CD8-positive, alpha-beta T cell (primary cell): ENCODE measurements at regions of chr16 and their contacts with region 1.

Region 1: GRCh38 chr16:58629572-58630104 is at the start of gene CNOT1:
- DNase-seq: peak; percentile 95 to 99 (median 97)
- ATAC-seq: peak; percentile 78
- H3K4me3 ChIP-seq: peak within 1 kb of the TSS; percentile 93
- H3K4me3 Mint-ChIP-seq: peak within 1 kb of the TSS; percentile 100
- H3K27ac ChIP-seq: peak within 1 kb of the TSS; percentile 91 to 98
- H3K27ac Mint-ChIP-seq: peak within 1 kb of the TSS; percentile 100
- H3K4me1 ChIP-seq: peaks cover 18% of the 10 kb centered on the region
- H3K4me1 Mint-ChIP-seq: peaks cover 30% of the 10 kb centered on the region
- H3K27me3 ChIP-seq: no peaks in the 10 kb centered on the region
- H3K27me3 Mint-ChIP-seq: no peaks in the 10 kb centered on the region
- CTCF ChIP-seq: no peak
- total RNA-seq, gene CNOT1: 165 to 177 TPM

Region 2: DNA sequence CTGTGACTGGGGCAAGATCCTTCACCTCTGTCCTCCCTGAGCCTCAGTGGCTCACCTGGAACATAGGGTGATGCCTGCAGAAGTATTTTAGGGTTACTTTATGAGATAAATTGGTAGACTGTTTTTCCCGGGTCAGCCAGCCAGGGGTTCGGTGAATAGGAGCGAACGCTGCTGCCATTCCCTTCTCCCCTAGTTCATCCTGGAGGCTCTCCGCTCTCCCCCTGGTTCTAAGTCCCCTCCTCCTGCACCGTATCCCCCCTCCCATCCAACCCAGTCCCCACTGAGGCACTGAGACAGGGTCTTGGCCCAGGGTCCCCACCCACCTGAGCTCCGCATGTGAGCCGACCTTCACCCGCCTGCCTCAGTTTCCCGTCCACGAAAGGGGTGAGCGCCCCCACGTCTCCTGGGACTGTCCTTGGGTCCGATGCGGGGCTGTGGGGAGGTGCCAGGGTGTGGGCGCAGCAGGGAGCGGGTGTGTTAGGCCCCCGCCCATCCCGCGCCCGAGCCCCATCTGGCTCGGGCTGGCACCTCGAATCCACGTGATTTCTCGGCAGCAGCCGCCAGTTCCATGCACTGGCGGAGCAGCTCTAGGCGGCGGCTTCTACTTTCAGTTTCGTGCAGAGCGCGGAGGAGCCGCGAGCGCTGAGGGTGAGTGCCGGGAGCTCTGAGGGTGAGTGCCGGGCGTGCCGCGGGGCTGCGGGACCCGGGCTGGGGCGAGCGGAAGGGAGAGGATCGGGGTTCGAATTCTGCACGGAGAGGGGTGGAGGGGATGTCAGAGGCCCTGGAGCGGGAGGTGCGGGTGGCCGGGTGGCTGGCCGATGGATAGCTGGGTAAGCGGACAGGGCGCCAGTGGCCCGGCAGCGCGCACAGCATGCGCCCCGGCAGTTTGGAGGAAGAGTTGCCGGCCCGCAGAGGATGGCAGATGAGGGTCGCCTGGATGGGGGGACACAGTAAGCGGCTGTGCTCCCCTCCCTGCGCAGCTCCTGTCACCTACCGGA is 1640.4 kb before region 1 on chr16 and contains the start of gene NLRC5:
- CTCF ChIA-PET with region 1: no interaction called
- POLR2A ChIA-PET with region 1: no interaction called
- intact Hi-C with region 1: no loop called
- DNase-seq: peak; percentile 79 to 95 (median 89)
- ATAC-seq: peak; percentile 81
- H3K4me3 ChIP-seq: peak within 1 kb of the TSS; percentile 98
- H3K4me3 Mint-ChIP-seq: peak within 1 kb of the TSS; percentile 100
- H3K27ac ChIP-seq: peak within 1 kb of the TSS; percentile 90 to 92
- H3K27ac Mint-ChIP-seq: peak within 1 kb of the TSS; percentile 98
- H3K4me1 ChIP-seq: peaks cover 70% of the 10 kb centered on the region
- H3K4me1 Mint-ChIP-seq: peaks cover 74% of the 10 kb centered on the region
- H3K27me3 ChIP-seq: no peaks in the 10 kb centered on the region
- H3K27me3 Mint-ChIP-seq: no peaks in the 10 kb centered on the region
- CTCF ChIP-seq: no peak
- total RNA-seq, gene NLRC5: 670 to 690 TPM

Region 3: GRCh38 chr16:57447186-57447962 is 1182.3 kb before region 1 on chr16 and contains the starts of genes CIAPIN1 and COQ9:
- CTCF ChIA-PET with region 1: no interaction called
- POLR2A ChIA-PET with region 1: no interaction called
- intact Hi-C with region 1: loop called in 1 of 2 experiments (anchors 10 kb)
- DNase-seq: peak; percentile 85 to 97 (median 92)
- ATAC-seq: peak; percentile 98
- H3K4me3 ChIP-seq: peak within 1 kb of the TSS; percentile 93 to 96
- H3K4me3 Mint-ChIP-seq: peak within 1 kb of the TSS; percentile 91
- H3K27ac ChIP-seq: peak within 1 kb of the TSS; percentile 79 to 83
- H3K27ac Mint-ChIP-seq: peak within 1 kb of the TSS; percentile 93
- H3K4me1 ChIP-seq: peaks cover 20% of the 10 kb centered on the region
- H3K4me1 Mint-ChIP-seq: peaks cover 53% of the 10 kb centered on the region
- H3K27me3 ChIP-seq: no peaks in the 10 kb centered on the region
- H3K27me3 Mint-ChIP-seq: no peaks in the 10 kb centered on the region
- CTCF ChIP-seq: no peak
- total RNA-seq, gene CIAPIN1: 28.6 to 29.7 TPM
- total RNA-seq, gene COQ9: 8.1 to 11.7 TPM

Region 4: DNA sequence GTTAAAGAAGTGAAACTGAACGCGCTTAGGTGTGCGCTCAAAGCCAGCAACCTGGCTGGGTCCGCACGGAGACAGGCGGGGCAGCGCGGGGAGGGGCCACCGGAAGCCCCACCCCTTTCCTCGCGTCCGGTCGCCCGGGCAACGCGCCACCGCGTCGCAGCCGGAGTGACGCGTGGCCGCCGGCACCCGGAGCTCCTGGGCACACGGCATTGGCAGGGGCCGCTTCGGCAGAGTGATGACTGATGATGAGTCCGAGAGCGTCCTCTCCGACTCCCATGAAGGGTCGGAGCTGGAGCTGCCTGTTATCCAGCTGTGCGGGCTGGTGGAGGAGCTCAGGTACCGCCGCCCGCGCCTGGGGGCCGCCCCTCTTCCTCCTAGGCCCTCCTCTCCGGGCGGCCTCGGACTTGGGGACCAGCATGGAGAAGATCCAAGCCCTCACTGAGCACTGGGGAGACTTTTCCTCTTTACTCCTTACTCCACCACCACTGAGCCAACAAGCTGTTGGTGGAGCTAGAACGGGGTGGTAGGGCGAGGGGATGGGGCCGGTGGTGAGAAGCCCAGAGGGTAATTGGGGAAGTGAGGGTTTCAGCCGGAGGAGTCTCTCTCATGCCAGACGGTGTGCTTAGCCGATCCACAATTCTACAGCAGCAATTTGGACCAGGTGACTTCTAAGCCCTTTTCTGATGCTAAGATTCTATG is 379.7 kb before region 1 on chr16:
- CTCF ChIA-PET with region 1: no interaction called
- POLR2A ChIA-PET with region 1: no interaction called
- intact Hi-C with region 1: loop called (anchors 1 to 5 kb)
- DNase-seq: peak; percentile 70 to 91 (median 81)
- ATAC-seq: peak; percentile 98
- H3K4me3 ChIP-seq: peak overlapping the region; percentile 64 to 75
- H3K4me3 Mint-ChIP-seq: peak overlapping the region; percentile 83
- H3K27ac ChIP-seq: peak overlapping the region in 1 of 2 experiments; percentile 21
- H3K27ac Mint-ChIP-seq: no peak overlapping the region
- H3K4me1 ChIP-seq: peaks cover 10% of the 10 kb centered on the region
- H3K4me1 Mint-ChIP-seq: peaks cover 9% of the 10 kb centered on the region
- H3K27me3 ChIP-seq: peaks cover 0 to 6% of the 10 kb centered on the region in 2 experiments
- H3K27me3 Mint-ChIP-seq: peaks cover 2% of the 10 kb centered on the region
- CTCF ChIP-seq: no peak

Region 5: DNA sequence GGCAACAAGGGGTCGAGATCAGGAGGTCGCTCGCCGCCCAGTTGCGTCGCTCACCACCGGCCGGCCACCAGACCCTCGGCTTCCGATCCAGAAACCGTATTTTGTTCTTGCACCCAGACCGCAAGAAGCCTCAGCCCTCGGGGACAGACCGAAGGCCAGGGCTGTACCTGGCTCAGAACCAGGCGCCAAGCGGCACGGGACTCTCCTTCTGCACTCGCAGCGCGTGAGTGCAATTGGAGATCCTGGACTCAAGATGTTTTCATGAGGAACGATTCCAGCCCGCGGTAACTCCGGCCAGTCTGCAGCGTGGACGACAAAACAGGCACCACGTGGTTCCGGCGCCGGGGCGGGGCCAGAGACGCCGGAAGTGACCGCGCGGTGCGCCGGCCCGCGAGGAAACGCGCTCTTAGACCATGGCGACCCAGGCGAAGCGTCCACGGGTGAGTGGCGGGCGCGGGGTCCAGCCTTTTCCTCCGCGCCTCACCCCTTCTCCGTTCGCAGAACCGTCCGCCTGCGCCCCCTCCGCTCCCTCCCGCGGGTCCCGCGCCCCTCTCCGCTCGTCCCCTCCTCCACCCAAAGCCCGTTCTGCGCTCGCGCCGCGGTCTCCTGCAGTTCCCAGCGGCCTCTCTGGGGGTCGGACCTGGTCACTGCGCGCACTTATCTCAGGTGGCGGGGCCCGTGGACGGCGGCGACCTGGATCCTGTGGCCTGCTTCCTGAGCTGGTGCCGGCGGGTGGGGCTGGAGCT is 114.3 kb before region 1 on chr16 and contains the start of gene SETD6:
- CTCF ChIA-PET with region 1: no interaction called
- POLR2A ChIA-PET with region 1: no interaction called
- intact Hi-C with region 1: loop called (anchors 1 to 5 kb)
- DNase-seq: peak; percentile 25 to 81 (median 68)
- ATAC-seq: peak; percentile 59
- H3K4me3 ChIP-seq: peak within 1 kb of the TSS; percentile 72 to 92
- H3K4me3 Mint-ChIP-seq: peak within 1 kb of the TSS; percentile 90
- H3K27ac ChIP-seq: peak within 1 kb of the TSS; percentile 64 to 73
- H3K27ac Mint-ChIP-seq: peak within 1 kb of the TSS; percentile 80
- H3K4me1 ChIP-seq: peaks cover 13% of the 10 kb centered on the region
- H3K4me1 Mint-ChIP-seq: peaks cover 20% of the 10 kb centered on the region
- H3K27me3 ChIP-seq: no peaks in the 10 kb centered on the region
- H3K27me3 Mint-ChIP-seq: no peaks in the 10 kb centered on the region
- CTCF ChIP-seq: no peak
- total RNA-seq, gene SETD6: 17.3 to 17.4 TPM

Region 6: GRCh38 chr16:58670177-58670576 is 40.5 kb after region 1 on chr16:
- CTCF ChIA-PET with region 1: no interaction called
- POLR2A ChIA-PET with region 1: no interaction called
- intact Hi-C with region 1: no loop called
- DNase-seq: no peak
- ATAC-seq: no peak
- H3K4me3 ChIP-seq: no peak overlapping the region
- H3K4me3 Mint-ChIP-seq: no peak overlapping the region
- H3K27ac ChIP-seq: no peak overlapping the region
- H3K27ac Mint-ChIP-seq: no peak overlapping the region
- H3K4me1 ChIP-seq: no peaks in the 10 kb centered on the region
- H3K4me1 Mint-ChIP-seq: no peaks in the 10 kb centered on the region
- H3K27me3 ChIP-seq: no peaks in the 10 kb centered on the region
- H3K27me3 Mint-ChIP-seq: no peaks in the 10 kb centered on the region
- CTCF ChIP-seq: no peak

Region 7: DNA sequence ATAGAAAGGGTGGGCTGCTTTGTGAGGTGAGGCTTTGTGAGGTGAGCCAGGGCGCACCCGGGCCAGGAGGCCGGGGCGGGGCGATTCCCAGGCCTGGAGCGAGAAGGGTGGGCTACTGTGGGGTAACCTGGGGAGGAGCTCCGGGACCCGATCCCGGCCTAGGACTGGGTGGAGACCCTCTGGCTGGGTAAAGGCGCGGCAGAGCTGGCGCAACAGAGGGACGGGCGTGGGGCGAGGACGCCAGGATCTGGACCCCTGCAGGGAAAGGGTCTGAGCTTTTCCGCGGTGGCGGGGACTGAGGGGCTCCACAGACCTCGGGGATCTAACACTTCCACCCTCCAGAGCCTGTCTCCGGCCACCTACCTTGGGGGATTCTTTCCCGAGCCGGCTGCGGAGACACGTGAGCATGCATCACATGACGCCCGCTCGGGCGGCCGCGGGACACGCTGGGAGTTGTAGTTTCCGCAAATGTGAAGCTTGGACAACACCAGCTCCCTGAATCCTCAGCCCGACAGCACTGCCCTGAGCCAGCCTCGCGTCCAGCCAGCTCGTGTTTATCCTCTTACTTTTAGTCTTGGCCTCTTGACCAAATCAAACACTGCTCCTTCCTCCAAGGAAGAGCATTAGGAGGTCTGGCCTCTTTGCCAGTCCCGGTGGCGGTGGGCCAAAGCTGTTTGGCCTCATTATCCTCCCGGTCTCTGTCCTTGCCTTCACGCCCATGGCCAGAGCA is 54.9 kb after region 1 on chr16 and contains the start of gene SLC38A7:
- CTCF ChIA-PET with region 1: no interaction called
- POLR2A ChIA-PET with region 1: no interaction called
- intact Hi-C with region 1: loop called (anchors 1 kb)
- DNase-seq: peak; percentile 43 to 81 (median 69)
- ATAC-seq: peak; percentile 88
- H3K4me3 ChIP-seq: peak within 1 kb of the TSS; percentile 76 to 95
- H3K4me3 Mint-ChIP-seq: peak within 1 kb of the TSS; percentile 91
- H3K27ac ChIP-seq: peak within 1 kb of the TSS; percentile 47 to 51
- H3K27ac Mint-ChIP-seq: peak within 1 kb of the TSS; percentile 80
- H3K4me1 ChIP-seq: peaks cover 19% of the 10 kb centered on the region
- H3K4me1 Mint-ChIP-seq: peaks cover 22% of the 10 kb centered on the region
- H3K27me3 ChIP-seq: no peaks in the 10 kb centered on the region
- H3K27me3 Mint-ChIP-seq: no peaks in the 10 kb centered on the region
- CTCF ChIP-seq: no peak
- total RNA-seq, gene SLC38A7: 3.7 to 4.6 TPM

Region 8: GRCh38 chr16:58733671-58734458 is 104.2 kb after region 1 on chr16 and contains the start of gene GOT2:
- CTCF ChIA-PET with region 1: no interaction called
- POLR2A ChIA-PET with region 1: no interaction called
- intact Hi-C with region 1: loop called (anchors 1 to 2 kb)
- DNase-seq: peak; percentile 63 to 90 (median 77)
- ATAC-seq: peak; percentile 97
- H3K4me3 ChIP-seq: peak within 1 kb of the TSS; percentile 73 to 82
- H3K4me3 Mint-ChIP-seq: peak within 1 kb of the TSS; percentile 98
- H3K27ac ChIP-seq: peak within 1 kb of the TSS; percentile 44 to 71
- H3K27ac Mint-ChIP-seq: peak within 1 kb of the TSS; percentile 91
- H3K4me1 ChIP-seq: peaks cover 21% of the 10 kb centered on the region
- H3K4me1 Mint-ChIP-seq: peaks cover 41% of the 10 kb centered on the region
- H3K27me3 ChIP-seq: no peaks in the 10 kb centered on the region
- H3K27me3 Mint-ChIP-seq: no peaks in the 10 kb centered on the region
- CTCF ChIP-seq: peak; percentile 81
- total RNA-seq, gene GOT2: 14.0 to 15.2 TPM

Region 9: GRCh38 chr16:58862334-58863021 is 232.8 kb after region 1 on chr16:
- CTCF ChIA-PET with region 1: no interaction called
- POLR2A ChIA-PET with region 1: no interaction called
- intact Hi-C with region 1: no loop called
- DNase-seq: no peak
- ATAC-seq: no peak
- H3K4me3 ChIP-seq: no peak overlapping the region
- H3K4me3 Mint-ChIP-seq: no peak overlapping the region
- H3K27ac ChIP-seq: no peak overlapping the region
- H3K27ac Mint-ChIP-seq: no peak overlapping the region
- H3K4me1 ChIP-seq: no peaks in the 10 kb centered on the region
- H3K4me1 Mint-ChIP-seq: no peaks in the 10 kb centered on the region
- H3K27me3 ChIP-seq: no peaks in the 10 kb centered on the region
- H3K27me3 Mint-ChIP-seq: peaks cover 14% of the 10 kb centered on the region
- CTCF ChIP-seq: no peak

Region 10: DNA sequence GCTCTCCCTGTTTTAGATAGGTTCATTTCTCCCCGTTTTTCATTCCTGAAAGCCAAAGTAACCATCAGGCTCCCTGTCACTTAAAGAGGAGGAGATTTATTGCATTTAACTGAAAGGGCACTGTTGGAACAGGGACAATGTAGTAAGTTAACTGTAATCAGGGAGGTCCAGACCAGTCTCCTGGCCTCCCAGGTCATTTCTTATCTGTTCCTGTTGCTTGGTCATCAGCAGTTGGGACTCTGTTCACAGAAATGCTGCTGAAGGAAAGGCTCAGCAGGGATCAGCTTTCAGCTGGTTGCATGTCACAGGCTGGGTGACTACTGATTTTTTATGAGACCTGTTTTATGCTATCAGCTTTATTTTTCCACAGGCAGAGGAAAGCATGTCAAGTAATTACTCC is 727.1 kb after region 1 on chr16:
- CTCF ChIA-PET with region 1: no interaction called
- POLR2A ChIA-PET with region 1: no interaction called
- intact Hi-C with region 1: no loop called
- DNase-seq: no peak
- ATAC-seq: no peak
- H3K4me3 ChIP-seq: no peak overlapping the region
- H3K4me3 Mint-ChIP-seq: no peak overlapping the region
- H3K27ac ChIP-seq: no peak overlapping the region
- H3K27ac Mint-ChIP-seq: no peak overlapping the region
- H3K4me1 ChIP-seq: no peaks in the 10 kb centered on the region
- H3K4me1 Mint-ChIP-seq: no peaks in the 10 kb centered on the region
- H3K27me3 ChIP-seq: no peaks in the 10 kb centered on the region
- H3K27me3 Mint-ChIP-seq: no peaks in the 10 kb centered on the region
- CTCF ChIP-seq: no peak